HepG2 (cell line): ENCODE measurements at regions of chr5 and their contacts with region 1.

Region 1: GRCh38 chr5:138065102-138065501 is 18.7 kb upstream of the WNT8A start:
- DNase-seq: no peak
- ATAC-seq: peak; percentile 84
- H3K4me3 ChIP-seq: no peak overlapping the region
- H3K27ac ChIP-seq: no peak overlapping the region
- H3K4me1 ChIP-seq: no peaks in the 10 kb centered on the region
- H3K27me3 ChIP-seq: no peaks in the 10 kb centered on the region
- CTCF ChIP-seq: peak; percentile 64
- EP300 ChIP-seq: no peak
- POLR2A ChIP-seq: no peak
- RAD21 ChIP-seq: no peak

Region 2: GRCh38 chr5:137629646-137630045 is 435.5 kb before region 1 on chr5:
- CTCF ChIA-PET with region 1: interaction called, 4 read pairs
- POLR2A ChIA-PET with region 1: no interaction called
- in situ Hi-C with region 1: loop called (anchors 10 kb)
- intact Hi-C with region 1: no loop called
- DNase-seq: peak; percentile 41
- ATAC-seq: peak; percentile 94
- H3K4me3 ChIP-seq: no peak overlapping the region
- H3K27ac ChIP-seq: no peak overlapping the region
- H3K4me1 ChIP-seq: no peaks in the 10 kb centered on the region
- H3K27me3 ChIP-seq: no peaks in the 10 kb centered on the region
- CTCF ChIP-seq: peak; percentile 82
- EP300 ChIP-seq: no peak
- POLR2A ChIP-seq: no peak
- RAD21 ChIP-seq: peak; percentile 82

Region 3: DNA sequence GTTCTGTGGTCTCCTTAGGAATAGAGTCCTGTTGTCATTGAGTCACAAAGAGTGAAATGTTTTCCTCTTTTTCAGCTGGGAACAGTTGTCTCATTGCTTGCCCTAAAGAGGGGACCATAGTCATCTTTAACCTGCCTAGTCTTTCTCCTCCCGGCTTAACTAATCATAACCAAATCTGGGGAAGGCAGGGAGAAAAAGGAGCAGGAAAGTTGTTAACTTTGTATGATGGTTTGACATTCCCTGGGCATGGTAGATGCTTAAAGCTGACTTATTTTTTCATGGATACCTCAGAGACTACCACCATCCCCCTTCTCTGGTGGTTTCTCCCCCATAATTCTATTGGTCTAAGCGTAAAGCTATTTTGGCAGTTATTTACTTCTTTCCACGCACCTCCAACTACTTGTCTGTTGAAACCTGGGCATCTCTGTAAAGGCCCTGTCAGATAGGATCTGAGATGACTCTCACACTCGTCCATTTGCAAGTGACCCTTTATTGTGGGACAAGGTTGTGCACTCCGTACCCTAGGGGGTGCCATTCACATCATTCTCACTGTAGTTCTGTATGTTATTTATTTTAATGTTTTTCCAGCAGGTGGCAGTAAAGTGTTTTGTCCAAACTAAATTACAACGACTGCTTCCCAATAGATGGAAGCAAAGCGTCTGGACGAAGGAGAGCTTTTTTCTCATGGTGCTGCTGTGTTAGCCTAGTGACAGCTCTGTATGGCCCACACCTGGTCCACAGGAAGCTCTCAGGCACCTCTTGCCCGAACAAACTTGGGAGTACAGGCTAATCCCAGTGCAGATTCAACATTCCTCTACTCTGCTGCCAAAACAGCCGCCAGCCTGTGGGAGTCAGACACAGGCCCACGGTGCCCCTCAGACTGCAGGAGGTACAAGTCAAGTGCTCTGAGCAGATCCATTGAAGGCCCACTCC is 29.2 kb before region 1 on chr5:
- CTCF ChIA-PET with region 1: interaction called, 68 read pairs
- POLR2A ChIA-PET with region 1: no interaction called
- in situ Hi-C with region 1: loop called (anchors 5 kb)
- intact Hi-C with region 1: loop called (anchors 1 kb)
- DNase-seq: peak; percentile 91
- ATAC-seq: peak; percentile 80
- H3K4me3 ChIP-seq: peak overlapping the region in 1 of 3 experiments; percentile 15; a peak in 1 of 6 replicates
- H3K27ac ChIP-seq: no peak overlapping the region
- H3K4me1 ChIP-seq: peaks cover 26% of the 10 kb centered on the region
- H3K27me3 ChIP-seq: no peaks in the 10 kb centered on the region; a peak in 1 of 5 replicates
- CTCF ChIP-seq: peak; percentile 88
- EP300 ChIP-seq: no peak
- POLR2A ChIP-seq: no peak
- RAD21 ChIP-seq: peak; percentile 74